Psoas muscle (tissue), 8 donors: ENCODE measurements at regions of chr11 and their contacts with region 1.

Region 1: GRCh38 chr11:27698872-27699474 is 1.3 kb downstream of the BDNF start:
- DNase-seq: peak; percentile 67 to 83
- ATAC-seq: peak; percentile 82 to 93 (median 92)
- H3K4me3 ChIP-seq: peak overlapping the region; percentile 70
- H3K27ac ChIP-seq: peak overlapping the region; percentile 10
- H3K4me1 ChIP-seq: peaks cover 5% of the 10 kb centered on the region
- H3K27me3 ChIP-seq: peaks cover 0 to 15% (median 3%) of the 10 kb centered on the region in 3 donors
- CTCF ChIP-seq: peak; percentile 75

Region 2: GRCh38 chr11:27757953-27758352 is 59.0 kb after region 1 on chr11:
- intact Hi-C with region 1: no loop called
- DNase-seq: no peak
- ATAC-seq: no peak
- H3K4me3 ChIP-seq: no peak overlapping the region
- H3K27ac ChIP-seq: no peak overlapping the region
- H3K4me1 ChIP-seq: no peaks in the 10 kb centered on the region
- H3K27me3 ChIP-seq: no peaks in the 10 kb centered on the region
- CTCF ChIP-seq: no peak

Region 3: GRCh38 chr11:28017816-28018215 is 318.8 kb after region 1 on chr11:
- intact Hi-C with region 1: no loop called
- DNase-seq: no peak
- ATAC-seq: no peak
- H3K4me3 ChIP-seq: no peak overlapping the region
- H3K27ac ChIP-seq: no peak overlapping the region
- H3K4me1 ChIP-seq: no peaks in the 10 kb centered on the region
- H3K27me3 ChIP-seq: no peaks in the 10 kb centered on the region
- CTCF ChIP-seq: no peak

Region 4: GRCh38 chr11:28529540-28530410 is 830.8 kb after region 1 on chr11:
- intact Hi-C with region 1: loop called (anchors 2 to 5 kb)
- DNase-seq: no peak
- ATAC-seq: peak in 1 of 4 donors; percentile 51
- H3K4me3 ChIP-seq: no peak overlapping the region
- H3K27ac ChIP-seq: no peak overlapping the region
- H3K4me1 ChIP-seq: no peaks in the 10 kb centered on the region
- H3K27me3 ChIP-seq: no peaks in the 10 kb centered on the region
- CTCF ChIP-seq: peak; percentile 48

Region 5: DNA sequence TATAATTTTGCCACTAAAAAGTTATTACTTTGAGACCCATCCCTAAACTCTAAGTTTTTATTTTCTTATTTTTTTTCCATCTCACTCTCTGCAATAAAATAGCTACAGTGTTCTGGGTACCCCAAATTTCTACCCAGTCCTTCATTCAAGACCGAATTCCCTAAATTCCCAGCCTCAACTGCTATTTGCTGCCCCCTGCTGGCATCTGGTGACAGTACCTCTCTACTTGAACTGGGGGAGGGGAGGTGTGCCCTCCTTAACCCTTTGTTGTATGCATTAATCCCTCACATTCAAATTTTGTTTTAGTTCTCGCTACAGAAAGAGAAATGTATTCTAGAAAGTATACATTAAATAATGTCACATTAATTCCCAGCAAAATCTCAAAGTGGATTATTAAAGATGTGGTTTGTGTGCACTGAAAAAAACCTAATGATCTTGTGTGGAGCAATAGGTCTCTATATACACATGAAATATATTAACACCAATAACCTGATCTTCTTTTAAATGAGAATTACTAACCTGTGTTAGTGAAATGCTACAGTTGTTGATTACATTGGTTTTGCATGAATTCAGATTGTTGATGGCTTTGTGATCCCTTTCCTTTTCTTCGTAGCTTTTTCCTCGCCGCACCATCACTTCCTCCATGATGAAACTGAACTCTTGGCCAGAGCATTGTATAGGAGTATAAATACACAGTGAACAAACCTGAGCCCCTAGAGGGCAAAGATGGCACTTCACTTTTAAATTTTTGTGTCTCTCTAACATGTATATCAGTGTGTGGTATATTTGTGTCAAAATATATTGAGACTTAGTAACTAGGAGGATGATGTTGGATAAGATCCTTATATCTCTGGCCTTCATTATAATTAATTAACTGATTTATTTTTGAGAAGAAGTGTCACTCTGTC is 999.2 kb after region 1 on chr11:
- intact Hi-C with region 1: loop called in 1 of 2 experiments (anchors 5 kb)
- DNase-seq: peak; percentile 28 to 56
- ATAC-seq: peak in 2 of 4 donors; percentile 53 to 58
- H3K4me3 ChIP-seq: no peak overlapping the region
- H3K27ac ChIP-seq: no peak overlapping the region
- H3K4me1 ChIP-seq: no peaks in the 10 kb centered on the region
- H3K27me3 ChIP-seq: no peaks in the 10 kb centered on the region
- CTCF ChIP-seq: peak; percentile 64

Region 6: DNA sequence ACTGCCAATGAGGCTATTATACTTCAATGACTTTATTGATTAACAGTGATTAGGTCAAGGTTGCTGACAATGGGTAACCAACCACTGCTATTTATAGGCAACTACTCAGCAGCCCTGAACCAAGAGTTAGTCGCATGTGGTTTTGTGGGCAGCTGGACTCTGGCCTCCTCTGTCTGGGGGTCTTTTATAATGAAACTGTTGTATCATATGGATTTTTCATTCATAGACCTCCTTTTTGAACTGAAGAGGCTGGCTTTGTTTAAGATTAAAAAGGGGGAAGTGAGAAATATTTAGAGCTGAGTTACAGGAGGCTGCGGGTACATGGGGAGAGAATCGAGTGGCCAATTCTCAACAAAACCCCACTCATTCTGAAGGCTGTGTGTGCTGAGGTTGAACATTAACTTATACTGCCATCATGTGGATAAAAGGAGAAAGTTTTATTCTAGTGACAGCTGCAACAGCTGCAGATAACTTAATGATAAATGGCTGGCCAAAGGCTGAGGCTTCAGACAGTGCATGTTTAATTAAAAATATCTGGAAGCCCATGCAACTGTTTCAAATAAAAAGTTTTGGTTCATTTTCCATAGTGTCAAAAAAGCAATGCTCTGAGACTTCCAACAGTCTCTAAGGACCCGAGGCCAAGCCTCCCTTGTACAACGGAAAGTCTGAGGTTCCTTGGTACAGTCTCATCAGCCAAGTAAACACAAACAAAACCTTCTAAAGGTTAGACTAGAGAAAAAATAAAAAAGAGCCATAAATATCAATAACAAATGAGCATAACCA is 1635.2 kb after region 1 on chr11:
- intact Hi-C with region 1: loop called in 1 of 2 experiments (anchors 5 kb)
- DNase-seq: no peak
- ATAC-seq: peak; percentile 53 to 76 (median 74)
- H3K4me3 ChIP-seq: no peak overlapping the region
- H3K27ac ChIP-seq: no peak overlapping the region
- H3K4me1 ChIP-seq: no peaks in the 10 kb centered on the region
- H3K27me3 ChIP-seq: peaks cover 0 to 3% (median 0%) of the 10 kb centered on the region in 3 donors
- CTCF ChIP-seq: peak; percentile 29